Heart left ventricle (tissue), 16 donors: ENCODE measurements at regions of chr19 and their contacts with region 1.

Region 1: GRCh38 chr19:47075179-47075810 is 26.9 kb upstream of the TMEM160 start:
- DNase-seq: no peak
- ATAC-seq: peak in 1 of 4 donors; percentile 41
- H3K4me3 ChIP-seq: no peak overlapping the region
- H3K27ac ChIP-seq: no peak overlapping the region
- H3K4me1 ChIP-seq: peaks cover 0 to 17% (median 5%) of the 10 kb centered on the region in 12 donors
- H3K27me3 ChIP-seq: no peaks in the 10 kb centered on the region
- CTCF ChIP-seq: no peak
- POLR2A ChIP-seq: no peak

Region 2: DNA sequence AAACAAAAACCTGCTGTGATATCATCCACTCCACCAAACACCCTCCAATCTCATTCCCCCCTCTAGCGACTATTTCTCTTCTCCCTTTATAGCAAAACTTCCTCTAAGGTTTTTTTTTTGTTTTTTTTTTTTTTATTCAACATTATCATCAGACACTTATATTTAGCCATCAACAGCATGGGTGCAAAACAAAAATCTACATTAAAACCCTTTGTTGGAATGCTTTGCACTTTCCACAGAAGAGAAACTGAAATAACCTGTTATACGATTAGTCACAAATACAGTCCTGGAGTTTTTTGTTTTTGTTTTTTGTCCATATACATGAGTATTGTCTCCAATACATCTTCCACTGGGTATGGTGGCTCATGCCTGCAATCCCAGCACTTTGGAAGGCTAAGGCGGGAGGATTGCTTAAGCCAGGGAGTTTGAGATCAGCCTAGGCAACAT is 249.7 kb before region 1 on chr19:
- intact Hi-C with region 1: no loop called
- DNase-seq: no peak
- ATAC-seq: no peak
- H3K4me3 ChIP-seq: no peak overlapping the region
- H3K27ac ChIP-seq: peak overlapping the region in 1 of 12 donors; percentile 85
- H3K4me1 ChIP-seq: peaks cover 0 to 37% (median 0%) of the 10 kb centered on the region in 12 donors
- H3K27me3 ChIP-seq: no peaks in the 10 kb centered on the region
- CTCF ChIP-seq: peak in 1 of 12 donors; percentile 12
- POLR2A ChIP-seq: no peak

Region 3: DNA sequence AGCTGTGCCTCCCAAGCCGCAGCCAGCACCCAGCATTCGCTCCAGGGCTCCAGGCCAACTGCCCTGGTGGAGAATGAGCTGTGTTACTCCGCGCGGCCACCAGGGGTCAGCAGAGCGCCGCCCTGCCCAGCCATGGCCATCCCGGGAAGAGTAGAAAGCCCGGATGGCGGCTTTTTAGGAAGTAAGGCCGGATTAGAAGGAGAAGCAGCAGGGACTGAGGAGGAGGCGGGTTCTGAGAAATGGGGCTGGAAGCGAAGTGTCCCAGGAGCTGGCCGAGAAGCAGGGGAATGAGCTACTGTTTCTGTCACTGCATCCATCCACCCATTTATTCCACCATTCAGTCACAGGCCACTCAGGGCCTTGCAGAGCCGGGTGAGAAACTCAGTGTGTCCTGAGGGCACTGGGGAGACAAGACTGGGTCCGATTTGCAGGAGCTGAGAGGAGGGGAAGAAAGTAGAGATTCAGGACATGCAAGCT is 62.2 kb before region 1 on chr19:
- intact Hi-C with region 1: no loop called
- DNase-seq: peak; percentile 77 to 92 (median 86)
- ATAC-seq: peak; percentile 92 to 96 (median 95)
- H3K4me3 ChIP-seq: no peak overlapping the region
- H3K27ac ChIP-seq: no peak overlapping the region
- H3K4me1 ChIP-seq: peaks cover 0 to 8% (median 2%) of the 10 kb centered on the region in 12 donors
- H3K27me3 ChIP-seq: peaks cover 0 to 2% (median 0%) of the 10 kb centered on the region in 9 donors
- CTCF ChIP-seq: peak; percentile 97 to 100 (median 99)
- POLR2A ChIP-seq: no peak

Region 4: GRCh38 chr19:47130591-47131227 is 55.4 kb after region 1 on chr19 and contains the start of gene SAE1:
- intact Hi-C with region 1: loop called (anchors 1 to 2 kb)
- DNase-seq: peak; percentile 94 to 98 (median 97)
- ATAC-seq: peak; percentile 83 to 95 (median 94)
- H3K4me3 ChIP-seq: peak within 1 kb of the TSS; percentile 51 to 86 (median 74)
- H3K27ac ChIP-seq: peak within 1 kb of the TSS; percentile 79 to 93 (median 90)
- H3K4me1 ChIP-seq: peaks cover 0 to 44% (median 22%) of the 10 kb centered on the region in 12 donors
- H3K27me3 ChIP-seq: no peaks in the 10 kb centered on the region
- CTCF ChIP-seq: peak; percentile 21 to 83 (median 52)
- POLR2A ChIP-seq: peak in 1 of 2 donors; percentile 77
- total RNA-seq, gene SAE1: 30.5 to 58.7 (median 49.7) TPM